H1 (cell line): ENCODE measurements at regions of chr4 and their contacts with region 1.

Region 1: DNA sequence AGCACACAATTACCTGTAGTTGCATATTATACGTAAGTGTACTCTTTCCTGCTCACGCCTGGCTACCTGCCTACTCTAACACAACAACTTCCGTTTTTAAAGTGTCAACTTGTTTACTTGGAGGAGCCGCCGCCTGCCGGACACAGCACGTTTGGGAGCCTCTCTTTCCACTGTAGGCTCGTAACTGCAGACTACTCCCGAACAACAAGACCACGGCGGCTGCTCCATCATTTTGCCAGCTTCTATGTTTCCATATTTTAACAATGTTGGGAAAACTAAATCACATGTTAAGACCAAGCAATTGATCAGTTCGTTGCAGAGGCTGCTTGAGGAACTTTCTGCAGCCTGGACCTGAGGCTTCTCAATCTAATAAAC is 841 bp downstream of the MTNR1A start:
- DNase-seq: no peak
- H3K4me3 ChIP-seq: peak overlapping the region; percentile 64 to 74 (median 67)
- H3K27ac ChIP-seq: no peak overlapping the region
- H3K4me1 ChIP-seq: peaks cover 0 to 5% (median 0%) of the 10 kb centered on the region in 4 experiments; a peak in 2 of 7 replicates
- H3K27me3 ChIP-seq: peaks cover 0 to 10% (median 5%) of the 10 kb centered on the region in 4 experiments; a peak in 5 of 7 replicates
- CTCF ChIP-seq: peak; percentile 33 to 39 (median 34); a peak in 3 of 4 replicates
- EP300 ChIP-seq: no peak
- POLR2A ChIP-seq: no peak
- RAD21 ChIP-seq: peak; percentile 46 to 58

Region 2: GRCh38 chr4:186297013-186297645 is 257.4 kb before region 1 on chr4:
- CTCF ChIA-PET with region 1: interaction called, 28 read pairs
- POLR2A ChIA-PET with region 1: interaction called, 5 read pairs
- DNase-seq: no peak
- H3K4me3 ChIP-seq: no peak overlapping the region
- H3K27ac ChIP-seq: no peak overlapping the region
- H3K4me1 ChIP-seq: peaks cover 0 to 7% (median 0%) of the 10 kb centered on the region in 4 experiments; a peak in 4 of 7 replicates
- H3K27me3 ChIP-seq: peaks cover 0 to 5% (median 2%) of the 10 kb centered on the region in 4 experiments; a peak in 3 of 7 replicates
- CTCF ChIP-seq: peak in 2 of 3 experiments; percentile 45 to 52; a peak in 2 of 4 replicates
- EP300 ChIP-seq: no peak
- POLR2A ChIP-seq: no peak
- RAD21 ChIP-seq: peak; percentile 76 to 77

Region 3: DNA sequence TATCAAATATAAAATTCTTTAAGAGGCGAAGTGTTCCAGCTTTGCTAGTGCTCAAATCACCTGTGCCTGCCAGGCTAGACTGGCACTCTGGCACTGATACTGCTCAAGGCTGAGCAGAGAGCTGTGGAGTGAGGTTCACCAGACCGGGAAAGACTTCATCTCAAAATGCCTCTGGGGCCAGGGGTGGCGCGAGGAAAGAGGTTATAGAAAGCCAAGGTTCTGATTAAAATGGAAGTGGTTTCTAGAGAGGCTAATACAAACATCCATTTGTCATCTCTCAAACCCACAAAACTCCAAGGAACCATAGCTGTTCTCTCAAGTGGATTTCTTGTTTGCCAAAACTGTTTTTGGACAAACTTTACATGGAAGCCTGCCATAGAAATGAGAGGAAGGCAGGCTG is 247.0 kb before region 1 on chr4:
- CTCF ChIA-PET with region 1: interaction called, 11 read pairs
- POLR2A ChIA-PET with region 1: no interaction called
- DNase-seq: no peak
- H3K4me3 ChIP-seq: no peak overlapping the region
- H3K27ac ChIP-seq: no peak overlapping the region
- H3K4me1 ChIP-seq: peaks cover 0 to 3% (median 0%) of the 10 kb centered on the region in 4 experiments; a peak in 1 of 7 replicates
- H3K27me3 ChIP-seq: no peaks in the 10 kb centered on the region; a peak in 1 of 7 replicates
- CTCF ChIP-seq: no peak
- EP300 ChIP-seq: no peak
- POLR2A ChIP-seq: no peak
- RAD21 ChIP-seq: no peak

Region 4: DNA sequence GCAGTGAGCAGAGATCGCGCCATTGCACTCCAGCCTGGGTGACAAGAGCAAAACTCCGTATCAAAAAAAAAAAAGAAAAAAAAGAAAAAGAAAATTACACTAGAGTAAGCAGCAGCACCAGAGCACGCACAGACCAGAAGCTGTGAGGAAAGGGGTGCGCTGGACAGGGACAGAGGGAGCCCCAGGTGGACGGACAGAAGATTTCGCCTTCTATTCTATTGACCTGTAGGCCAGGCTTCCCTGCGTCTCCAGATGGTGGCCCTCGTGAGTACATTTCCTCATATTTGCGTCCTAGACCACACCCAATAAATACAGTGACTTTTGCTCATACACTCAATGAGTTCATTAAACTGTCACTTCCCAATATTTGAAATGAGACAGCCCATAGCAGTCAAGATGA is 18.2 kb before region 1 on chr4:
- CTCF ChIA-PET with region 1: interaction called, 12 read pairs
- POLR2A ChIA-PET with region 1: no interaction called
- DNase-seq: no peak
- H3K4me3 ChIP-seq: no peak overlapping the region
- H3K27ac ChIP-seq: no peak overlapping the region
- H3K4me1 ChIP-seq: no peaks in the 10 kb centered on the region
- H3K27me3 ChIP-seq: no peaks in the 10 kb centered on the region
- CTCF ChIP-seq: peak; percentile 65 to 92 (median 74)
- EP300 ChIP-seq: no peak
- POLR2A ChIP-seq: no peak
- RAD21 ChIP-seq: peak; percentile 42 to 61; a peak in 3 of 4 replicates

Region 5: GRCh38 chr4:186587416-186588018 is 33.0 kb after region 1 on chr4:
- CTCF ChIA-PET with region 1: interaction called, 11 read pairs
- POLR2A ChIA-PET with region 1: interaction called, 3 read pairs
- DNase-seq: peak in 1 of 2 experiments; percentile 80
- H3K4me3 ChIP-seq: no peak overlapping the region
- H3K27ac ChIP-seq: no peak overlapping the region
- H3K4me1 ChIP-seq: no peaks in the 10 kb centered on the region; a peak in 1 of 7 replicates
- H3K27me3 ChIP-seq: no peaks in the 10 kb centered on the region
- CTCF ChIP-seq: peak; percentile 62 to 73 (median 67)
- EP300 ChIP-seq: no peak
- POLR2A ChIP-seq: no peak
- RAD21 ChIP-seq: peak; percentile 72 to 76

Region 6: GRCh38 chr4:186634591-186635128 is 80.1 kb after region 1 on chr4:
- CTCF ChIA-PET with region 1: no interaction called
- POLR2A ChIA-PET with region 1: no interaction called
- DNase-seq: no peak
- H3K4me3 ChIP-seq: no peak overlapping the region
- H3K27ac ChIP-seq: no peak overlapping the region
- H3K4me1 ChIP-seq: peaks cover 3 to 11% (median 10%) of the 10 kb centered on the region in 4 experiments; a peak in 4 of 7 replicates
- H3K27me3 ChIP-seq: no peaks in the 10 kb centered on the region
- CTCF ChIP-seq: no peak
- EP300 ChIP-seq: no peak
- POLR2A ChIP-seq: no peak
- RAD21 ChIP-seq: no peak